CD8-positive, alpha-beta T cell (primary cell): ENCODE measurements at regions of chr3 and their contacts with region 1.

Region 1: GRCh38 chr3:128075516-128076482 is 23.6 kb downstream of the SEC61A1 start:
- DNase-seq: peak; percentile 72 to 91 (median 87)
- ATAC-seq: peak; percentile 91
- H3K4me3 ChIP-seq: peak overlapping the region; percentile 56 to 73
- H3K4me3 Mint-ChIP-seq: peak overlapping the region; percentile 73
- H3K27ac ChIP-seq: no peak overlapping the region
- H3K27ac Mint-ChIP-seq: no peak overlapping the region
- H3K4me1 ChIP-seq: peaks cover 14% of the 10 kb centered on the region
- H3K4me1 Mint-ChIP-seq: peaks cover 7% of the 10 kb centered on the region
- H3K27me3 ChIP-seq: peaks cover 0 to 4% of the 10 kb centered on the region in 2 experiments
- H3K27me3 Mint-ChIP-seq: peaks cover 3% of the 10 kb centered on the region
- CTCF ChIP-seq: peak; percentile 94

Region 2: DNA sequence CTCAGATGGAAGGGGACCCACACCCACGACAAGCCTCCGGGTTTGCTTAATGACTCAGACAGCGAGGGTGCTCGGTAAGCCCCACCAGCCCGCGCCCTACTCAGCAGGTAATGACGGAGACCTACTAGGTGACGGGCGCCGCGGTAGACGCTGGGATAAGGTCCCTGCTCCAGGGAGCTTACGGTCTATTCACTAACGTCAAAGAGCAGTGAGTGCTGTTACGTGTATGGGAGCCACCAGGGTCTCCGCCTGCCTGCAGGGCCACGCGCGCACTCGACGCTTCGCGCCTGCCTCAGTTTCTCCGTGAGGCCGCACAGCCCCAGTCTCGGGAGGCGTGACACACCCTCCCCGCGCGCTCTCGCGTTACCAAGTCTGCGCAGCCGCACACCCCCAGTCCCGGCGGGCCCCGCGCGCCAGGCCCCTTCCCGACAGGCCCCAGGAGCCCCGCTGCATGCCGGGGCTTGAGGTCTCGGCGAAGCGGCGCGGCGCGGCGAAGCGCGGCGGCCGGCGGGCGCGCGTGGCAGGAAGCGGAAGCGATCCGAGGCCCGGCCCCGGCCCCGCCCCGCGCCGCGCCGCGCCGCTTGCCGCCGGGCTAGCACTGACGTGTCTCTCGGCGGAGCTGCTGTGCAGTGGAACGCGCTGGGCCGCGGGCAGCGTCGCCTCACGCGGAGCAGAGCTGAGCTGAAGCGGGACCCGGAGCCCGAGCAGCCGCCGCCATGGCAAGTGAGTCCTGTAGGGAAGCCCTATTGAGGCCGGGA is 23.8 kb before region 1 on chr3 and contains the start of gene SEC61A1:
- CTCF ChIA-PET with region 1: interaction called, 5 read pairs
- POLR2A ChIA-PET with region 1: no interaction called
- intact Hi-C with region 1: loop called (anchors 1 to 2 kb)
- DNase-seq: peak; percentile 87 to 97 (median 95)
- ATAC-seq: peak; percentile 93
- H3K4me3 ChIP-seq: peak within 1 kb of the TSS; percentile 92 to 95
- H3K4me3 Mint-ChIP-seq: peak within 1 kb of the TSS; percentile 99
- H3K27ac ChIP-seq: peak within 1 kb of the TSS; percentile 78 to 85
- H3K27ac Mint-ChIP-seq: peak within 1 kb of the TSS; percentile 98
- H3K4me1 ChIP-seq: peaks cover 35% of the 10 kb centered on the region
- H3K4me1 Mint-ChIP-seq: peaks cover 43% of the 10 kb centered on the region
- H3K27me3 ChIP-seq: no peaks in the 10 kb centered on the region
- H3K27me3 Mint-ChIP-seq: no peaks in the 10 kb centered on the region
- CTCF ChIP-seq: no peak
- total RNA-seq, gene SEC61A1: 125 to 131 TPM

Region 3: GRCh38 chr3:128123538-128124368 is 48.0 kb after region 1 on chr3 and contains the start of gene RUVBL1:
- CTCF ChIA-PET with region 1: interaction called, 3 read pairs
- POLR2A ChIA-PET with region 1: interaction called, 6 read pairs
- intact Hi-C with region 1: loop called (anchors 1 to 2 kb)
- DNase-seq: peak; percentile 92 to 99 (median 96)
- ATAC-seq: peak; percentile 92
- H3K4me3 ChIP-seq: peak within 1 kb of the TSS; percentile 82 to 90
- H3K4me3 Mint-ChIP-seq: peak within 1 kb of the TSS; percentile 98
- H3K27ac ChIP-seq: peak within 1 kb of the TSS; percentile 86 to 96
- H3K27ac Mint-ChIP-seq: peak within 1 kb of the TSS; percentile 98
- H3K4me1 ChIP-seq: peaks cover 19% of the 10 kb centered on the region
- H3K4me1 Mint-ChIP-seq: peaks cover 27% of the 10 kb centered on the region
- H3K27me3 ChIP-seq: no peaks in the 10 kb centered on the region
- H3K27me3 Mint-ChIP-seq: no peaks in the 10 kb centered on the region
- CTCF ChIP-seq: no peak
- total RNA-seq, gene RUVBL1: 5.1 to 5.6 TPM

Region 4: DNA sequence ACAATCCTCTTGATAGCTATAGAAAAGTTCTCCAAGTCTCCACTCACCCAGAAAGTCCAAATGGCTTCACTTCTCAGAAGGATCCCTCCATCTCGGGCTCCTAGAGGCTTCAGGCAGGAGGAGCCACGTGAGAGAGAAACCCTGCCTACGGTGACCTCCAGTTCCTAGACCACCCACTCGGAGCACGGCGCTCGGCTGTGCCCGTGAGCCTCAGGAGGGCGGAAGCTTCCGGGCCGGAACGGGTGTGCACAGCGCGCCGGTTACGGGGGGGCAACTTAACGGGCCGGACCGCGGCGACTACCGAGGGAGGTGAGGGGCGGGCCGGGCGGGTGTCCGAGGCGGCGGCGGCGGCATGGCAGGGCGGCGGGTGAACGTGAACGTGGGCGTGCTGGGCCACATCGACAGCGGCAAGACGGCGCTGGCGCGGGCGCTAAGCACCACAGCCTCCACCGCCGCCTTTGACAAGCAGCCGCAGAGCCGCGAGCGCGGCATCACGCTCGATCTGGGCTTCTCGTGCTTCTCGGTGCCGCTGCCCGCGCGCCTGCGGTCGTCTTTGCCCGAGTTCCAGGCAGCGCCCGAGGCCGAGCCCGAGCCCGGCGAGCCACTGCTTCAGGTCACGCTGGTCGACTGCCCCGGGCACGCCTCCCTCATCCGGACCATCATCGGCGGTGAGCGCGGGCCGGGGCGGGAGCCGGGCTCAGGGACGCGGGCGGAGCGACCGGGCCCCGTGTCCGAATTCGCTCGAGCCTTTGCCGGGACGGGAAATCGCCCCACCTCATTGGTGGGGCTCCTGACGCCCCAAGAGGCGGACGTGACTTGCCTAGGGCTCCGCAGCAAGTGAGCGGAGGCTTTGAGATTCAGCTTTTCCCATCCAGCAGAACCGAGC is 77.6 kb after region 1 on chr3 and contains the start of gene EEFSEC:
- CTCF ChIA-PET with region 1: no interaction called
- POLR2A ChIA-PET with region 1: no interaction called
- intact Hi-C with region 1: loop called in 1 of 2 experiments (anchors 5 kb)
- DNase-seq: peak; percentile 77 to 92 (median 84)
- ATAC-seq: peak; percentile 90
- H3K4me3 ChIP-seq: peak within 1 kb of the TSS; percentile 61 to 74
- H3K4me3 Mint-ChIP-seq: peak within 1 kb of the TSS; percentile 87
- H3K27ac ChIP-seq: peak within 1 kb of the TSS; percentile 65 to 77
- H3K27ac Mint-ChIP-seq: peak within 1 kb of the TSS; percentile 89
- H3K4me1 ChIP-seq: peaks cover 14% of the 10 kb centered on the region
- H3K4me1 Mint-ChIP-seq: peaks cover 42% of the 10 kb centered on the region
- H3K27me3 ChIP-seq: no peaks in the 10 kb centered on the region
- H3K27me3 Mint-ChIP-seq: no peaks in the 10 kb centered on the region
- CTCF ChIP-seq: no peak
- total RNA-seq, gene EEFSEC: 10.8 to 11.6 TPM

Region 5: DNA sequence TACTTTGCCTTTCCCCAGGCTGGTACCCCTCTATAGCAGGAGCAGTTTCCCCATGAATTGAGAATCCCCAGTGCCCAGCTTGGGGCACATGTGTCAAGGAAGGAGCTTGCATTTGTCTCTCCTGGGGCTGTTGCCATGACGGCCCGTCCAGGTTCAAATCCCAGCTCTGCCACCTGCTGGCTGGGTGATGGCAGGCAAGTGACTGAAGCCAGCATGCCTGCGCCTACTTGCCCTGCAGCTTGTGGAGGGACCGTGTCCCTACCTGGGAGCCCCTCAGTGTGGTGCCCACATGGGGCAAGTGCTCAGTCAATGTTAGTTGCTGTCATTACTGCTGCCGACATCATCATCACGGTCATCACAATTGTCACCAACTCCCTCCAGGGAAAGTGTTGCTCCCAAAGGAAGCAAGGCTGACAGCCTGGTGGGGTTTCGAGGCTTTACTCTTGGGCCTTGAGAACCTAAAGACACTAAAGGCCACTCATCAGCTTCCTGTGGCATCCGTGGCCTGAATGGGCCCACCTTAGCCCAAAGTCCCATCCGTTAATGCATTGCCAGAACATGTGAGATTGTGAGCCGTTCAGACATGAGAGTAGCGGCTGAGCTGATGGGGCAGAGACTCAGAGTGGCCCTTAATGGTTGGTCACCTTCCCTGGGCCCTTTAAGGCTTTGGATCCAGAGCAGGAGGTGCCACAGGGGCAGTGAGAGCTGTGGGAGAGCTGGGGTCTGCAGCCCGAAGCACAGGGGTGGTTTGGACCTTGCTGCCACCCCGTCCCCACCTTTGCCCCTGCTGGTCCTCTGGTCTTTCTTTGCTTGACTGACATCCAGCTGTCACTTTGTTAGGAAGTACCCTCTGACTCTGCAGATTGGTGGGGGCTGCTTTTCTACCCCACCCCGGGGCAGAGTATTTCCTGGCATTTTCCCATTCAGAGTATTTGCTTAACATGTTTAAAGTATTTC is 246.5 kb after region 1 on chr3:
- CTCF ChIA-PET with region 1: interaction called, 3 read pairs
- POLR2A ChIA-PET with region 1: no interaction called
- intact Hi-C with region 1: loop called (anchors 1 to 5 kb)
- DNase-seq: peak; percentile 25 to 83 (median 63)
- ATAC-seq: peak; percentile 64
- H3K4me3 ChIP-seq: no peak overlapping the region
- H3K4me3 Mint-ChIP-seq: no peak overlapping the region
- H3K27ac ChIP-seq: no peak overlapping the region
- H3K27ac Mint-ChIP-seq: peak overlapping the region; percentile 69
- H3K4me1 ChIP-seq: peaks cover 59% of the 10 kb centered on the region
- H3K4me1 Mint-ChIP-seq: peaks cover 70% of the 10 kb centered on the region
- H3K27me3 ChIP-seq: no peaks in the 10 kb centered on the region
- H3K27me3 Mint-ChIP-seq: no peaks in the 10 kb centered on the region
- CTCF ChIP-seq: peak; percentile 42

Region 6: GRCh38 chr3:128607710-128608048 is 531.9 kb after region 1 on chr3:
- CTCF ChIA-PET with region 1: interaction called, 3 read pairs
- POLR2A ChIA-PET with region 1: no interaction called
- intact Hi-C with region 1: loop called (anchors 1 kb)
- DNase-seq: no peak
- ATAC-seq: no peak
- H3K4me3 ChIP-seq: peak overlapping the region; percentile 57 to 76
- H3K4me3 Mint-ChIP-seq: no peak overlapping the region
- H3K27ac ChIP-seq: no peak overlapping the region
- H3K27ac Mint-ChIP-seq: no peak overlapping the region
- H3K4me1 ChIP-seq: peaks cover 5% of the 10 kb centered on the region
- H3K4me1 Mint-ChIP-seq: peaks cover 4% of the 10 kb centered on the region
- H3K27me3 ChIP-seq: peaks cover 0 to 2% of the 10 kb centered on the region in 2 experiments
- H3K27me3 Mint-ChIP-seq: peaks cover 3% of the 10 kb centered on the region
- CTCF ChIP-seq: no peak

Region 7: GRCh38 chr3:129278439-129278970 is 1202.7 kb after region 1 on chr3 and contains the start of gene HMCES:
- CTCF ChIA-PET with region 1: no interaction called
- POLR2A ChIA-PET with region 1: no interaction called
- intact Hi-C with region 1: loop called in 1 of 2 experiments (anchors 10 kb)
- DNase-seq: peak; percentile 88 to 98 (median 96)
- ATAC-seq: peak; percentile 94
- H3K4me3 ChIP-seq: peak within 1 kb of the TSS; percentile 59 to 92
- H3K4me3 Mint-ChIP-seq: peak within 1 kb of the TSS; percentile 95
- H3K27ac ChIP-seq: peak within 1 kb of the TSS; percentile 88 to 93
- H3K27ac Mint-ChIP-seq: peak within 1 kb of the TSS; percentile 97
- H3K4me1 ChIP-seq: peaks cover 39% of the 10 kb centered on the region
- H3K4me1 Mint-ChIP-seq: peaks cover 42% of the 10 kb centered on the region
- H3K27me3 ChIP-seq: no peaks in the 10 kb centered on the region
- H3K27me3 Mint-ChIP-seq: no peaks in the 10 kb centered on the region
- CTCF ChIP-seq: no peak
- total RNA-seq, gene HMCES: 69.5 to 78.7 TPM